PC-9 (cell line): ENCODE measurements at regions of chr22 and their contacts with region 1.

Region 1: DNA sequence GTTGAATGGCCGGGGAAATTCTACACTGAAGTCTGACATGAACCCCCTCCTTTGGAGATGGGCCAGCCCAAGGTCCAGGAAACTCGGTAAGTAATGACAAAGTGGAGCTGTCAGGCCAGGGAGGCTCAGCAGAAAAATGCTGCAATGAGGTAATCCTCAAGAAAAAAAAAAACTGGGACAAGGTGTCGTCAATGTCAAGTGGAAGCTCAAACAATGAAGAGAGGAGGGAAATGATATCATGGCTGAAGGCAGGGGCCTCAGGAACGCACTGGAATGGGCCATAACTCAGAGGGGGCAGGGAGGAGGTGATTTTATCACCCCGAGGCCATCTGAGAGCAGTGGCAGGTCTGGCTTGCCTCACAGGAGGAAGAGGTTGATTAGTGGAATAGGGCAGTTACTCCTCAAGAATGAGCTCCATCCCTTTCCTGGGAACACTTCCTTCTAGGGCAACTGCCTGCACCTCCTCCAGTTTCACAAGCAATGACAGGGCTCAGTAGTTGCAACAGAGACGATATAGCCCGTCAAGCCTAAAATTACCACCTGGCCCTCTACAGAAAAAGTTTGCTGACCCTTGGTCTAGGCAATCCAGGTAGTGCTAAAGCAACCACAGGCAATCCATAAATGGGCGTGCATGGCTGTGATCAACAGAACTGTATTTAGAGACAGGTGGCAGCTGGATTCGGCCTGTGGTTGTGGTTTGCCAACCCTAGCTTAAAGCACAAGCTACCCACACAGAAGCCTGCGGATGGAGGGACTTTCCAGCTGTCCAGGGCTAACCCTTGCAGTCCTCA is 65.2 kb downstream of the FBXO7 start:
- DNase-seq: peak; percentile 72 to 97
- H3K4me3 ChIP-seq: no peak overlapping the region
- H3K27ac ChIP-seq: peak overlapping the region; percentile 74
- H3K4me1 ChIP-seq: peaks cover 29% of the 10 kb centered on the region
- H3K27me3 ChIP-seq: no peaks in the 10 kb centered on the region
- CTCF ChIP-seq: no peak

Region 2: GRCh38 chr22:32558681-32559355 is 19.0 kb after region 1 on chr22:
- CTCF ChIA-PET with region 1: no interaction called
- POLR2A ChIA-PET with region 1: no interaction called
- intact Hi-C with region 1: loop called (anchors 2 kb)
- DNase-seq: peak; percentile 91 to 94
- H3K4me3 ChIP-seq: no peak overlapping the region
- H3K27ac ChIP-seq: peak overlapping the region; percentile 81
- H3K4me1 ChIP-seq: peaks cover 65% of the 10 kb centered on the region
- H3K27me3 ChIP-seq: no peaks in the 10 kb centered on the region
- CTCF ChIP-seq: no peak

Region 3: DNA sequence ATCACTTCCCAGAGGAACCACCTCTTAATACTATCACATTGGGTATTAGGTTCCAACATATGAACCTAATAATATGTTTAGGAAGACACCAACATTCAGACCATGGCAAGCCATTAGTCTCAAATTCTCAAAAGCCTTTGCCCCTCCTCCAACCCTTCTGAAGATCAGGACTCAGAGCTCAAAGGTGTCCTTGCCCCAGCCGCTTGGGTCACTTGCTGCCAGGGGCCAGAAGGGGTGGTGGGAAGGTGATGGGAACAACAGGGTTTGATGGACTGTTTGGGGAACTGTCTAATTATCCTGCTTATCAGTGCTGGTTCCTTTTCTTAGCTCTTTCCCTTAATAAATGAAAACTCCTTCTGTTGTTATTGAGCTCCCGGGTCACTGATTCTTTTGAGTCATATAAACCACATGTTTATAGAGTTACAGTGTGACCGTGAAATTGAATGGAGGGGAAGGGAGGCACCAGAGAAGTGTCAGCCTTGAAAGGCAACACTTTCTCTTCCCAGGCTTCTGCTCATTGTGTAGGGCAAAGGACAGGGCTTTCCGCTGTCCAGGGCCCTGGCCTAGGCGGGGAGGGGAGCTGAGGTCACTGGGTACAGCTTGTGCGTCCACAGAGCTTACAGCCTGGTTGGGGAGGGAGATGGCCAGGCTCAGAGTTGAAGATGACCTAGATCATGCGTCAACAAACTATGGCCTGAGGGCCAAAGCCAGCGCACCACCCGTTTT is 39.8 kb after region 1 on chr22:
- CTCF ChIA-PET with region 1: no interaction called
- POLR2A ChIA-PET with region 1: no interaction called
- intact Hi-C with region 1: no loop called
- DNase-seq: peak in 1 of 2 experiments; percentile 54
- H3K4me3 ChIP-seq: no peak overlapping the region
- H3K27ac ChIP-seq: peak overlapping the region; percentile 11
- H3K4me1 ChIP-seq: peaks cover 43% of the 10 kb centered on the region
- H3K27me3 ChIP-seq: no peaks in the 10 kb centered on the region
- CTCF ChIP-seq: no peak

Region 4: GRCh38 chr22:32628628-32629572 is 89.1 kb after region 1 on chr22:
- CTCF ChIA-PET with region 1: no interaction called
- POLR2A ChIA-PET with region 1: no interaction called
- intact Hi-C with region 1: no loop called
- DNase-seq: no peak
- H3K4me3 ChIP-seq: no peak overlapping the region
- H3K27ac ChIP-seq: peak overlapping the region; percentile 26; the same call in 1 of the 2 replicates
- H3K4me1 ChIP-seq: peaks cover 13% of the 10 kb centered on the region
- H3K27me3 ChIP-seq: no peaks in the 10 kb centered on the region
- CTCF ChIP-seq: no peak

Region 5: GRCh38 chr22:32810561-32811004 is 270.8 kb after region 1 on chr22:
- CTCF ChIA-PET with region 1: no interaction called
- POLR2A ChIA-PET with region 1: interaction called, 12 read pairs
- intact Hi-C with region 1: no loop called
- DNase-seq: peak; percentile 71 to 98
- H3K4me3 ChIP-seq: 0 out of 2 replicates have a peak overlapping the region, but pooled peaks have one; percentile 42
- H3K27ac ChIP-seq: peak overlapping the region; percentile 88
- H3K4me1 ChIP-seq: peaks cover 75% of the 10 kb centered on the region
- H3K27me3 ChIP-seq: no peaks in the 10 kb centered on the region
- CTCF ChIP-seq: no peak